ENCODE measurements at regions of chr22 and their contacts with region 1.

Region 1: GRCh38 chr22:36286471-36287224 is 33.7 kb downstream of the APOL1 start:
- DNase-seq: peak; percentile 77 to 83 (median 82)
- ATAC-seq: peak; percentile 99
- H3K4me3 ChIP-seq: no peak overlapping the region
- H3K27ac ChIP-seq: no peak overlapping the region; the same call in 2 of the 3 replicates
- H3K4me1 ChIP-seq: peaks cover 0 to 12% of the 10 kb centered on the region in 2 experiments; a peak in 2 of 5 replicates
- H3K27me3 ChIP-seq: no peaks in the 10 kb centered on the region
- CTCF ChIP-seq: peak; percentile 84 to 93 (median 91)
- EP300 ChIP-seq: no peak
- POLR2A ChIP-seq: no peak
- RAD21 ChIP-seq: peak; percentile 43 to 78

Region 2: DNA sequence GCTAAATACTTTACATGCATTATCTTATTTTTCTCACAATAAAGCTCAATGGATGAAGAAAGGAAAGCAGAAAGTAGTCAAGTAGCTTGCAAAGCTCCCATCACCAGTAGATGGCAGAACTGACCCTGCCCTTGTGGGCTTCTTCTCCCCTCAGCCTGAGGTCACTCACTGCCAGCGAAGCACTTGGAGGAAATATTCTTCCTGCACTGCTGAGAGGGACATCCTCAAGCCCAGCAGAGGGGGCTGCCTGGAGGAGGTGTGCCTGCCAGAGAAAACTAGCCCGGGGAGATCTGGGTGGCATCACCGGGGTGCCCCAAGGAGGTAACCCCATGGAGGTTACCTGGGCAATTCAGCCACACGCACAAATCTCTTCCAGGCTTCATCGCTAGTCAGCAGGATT is 91.7 kb before region 1 on chr22:
- CTCF ChIA-PET with region 1: interaction called, 3 read pairs
- POLR2A ChIA-PET with region 1: interaction called, 3 read pairs
- in situ Hi-C with region 1: no loop called
- intact Hi-C with region 1: loop called (anchors 2 kb)
- DNase-seq: peak in 2 of 4 experiments; percentile 20 to 56
- ATAC-seq: peak; percentile 72
- H3K4me3 ChIP-seq: no peak overlapping the region
- H3K27ac ChIP-seq: no peak overlapping the region
- H3K4me1 ChIP-seq: peaks cover 21 to 27% of the 10 kb centered on the region in 2 experiments; a peak in 4 of 5 replicates
- H3K27me3 ChIP-seq: no peaks in the 10 kb centered on the region
- CTCF ChIP-seq: peak; percentile 60 to 73 (median 60)
- EP300 ChIP-seq: no peak
- POLR2A ChIP-seq: no peak
- RAD21 ChIP-seq: peak; percentile 39 to 73; a peak in 3 of 4 replicates

Region 3: DNA sequence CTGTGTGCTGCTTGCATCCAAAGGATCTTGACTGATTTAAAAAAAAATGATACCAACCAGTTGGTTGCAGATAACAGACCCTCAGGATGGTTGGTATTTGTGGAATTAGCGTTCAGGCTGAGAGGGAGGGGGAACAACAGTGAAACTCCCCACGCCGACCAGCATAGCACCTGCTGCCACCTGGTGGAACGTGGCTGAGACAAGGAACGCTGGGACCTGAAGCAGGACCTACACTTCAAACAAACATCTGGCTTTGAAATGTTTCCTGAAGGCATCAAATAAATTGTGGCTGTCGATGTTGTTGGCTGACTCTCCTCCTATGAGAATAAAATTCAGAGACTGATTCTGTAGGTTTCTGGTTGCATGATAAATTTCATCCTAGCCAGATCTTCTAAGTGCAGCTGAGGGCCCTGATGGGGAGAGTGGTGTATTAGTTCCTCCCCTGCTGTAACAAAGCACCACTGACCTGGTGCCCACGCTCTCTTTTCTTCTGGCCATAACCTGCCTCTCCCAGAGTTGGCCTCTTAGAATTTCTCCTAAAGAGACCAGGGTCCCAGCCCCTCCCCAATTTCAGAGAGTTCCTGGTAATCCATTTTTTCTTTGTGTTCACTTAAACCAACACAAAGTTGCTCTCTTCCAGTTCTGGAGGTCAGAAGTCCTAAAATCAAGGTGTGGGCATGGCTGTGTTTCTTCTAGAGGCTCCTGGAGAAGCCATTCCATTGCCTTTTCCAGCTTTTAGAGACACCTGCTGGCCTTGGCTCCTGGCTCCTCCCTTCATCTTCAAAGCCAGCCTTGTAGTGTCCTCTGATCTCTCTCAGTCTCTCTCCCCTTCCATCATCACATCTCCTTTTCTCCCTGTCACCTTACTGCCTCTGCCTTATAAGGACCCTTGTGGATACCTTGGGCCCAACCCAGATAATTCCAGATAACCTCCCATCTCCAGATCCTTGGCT is 64.6 kb before region 1 on chr22:
- CTCF ChIA-PET with region 1: no interaction called
- POLR2A ChIA-PET with region 1: no interaction called
- in situ Hi-C with region 1: no loop called
- intact Hi-C with region 1: no loop called
- DNase-seq: peak; percentile 29 to 67 (median 40)
- ATAC-seq: peak; percentile 96
- H3K4me3 ChIP-seq: no peak overlapping the region
- H3K27ac ChIP-seq: no peak overlapping the region
- H3K4me1 ChIP-seq: peaks cover 0 to 8% of the 10 kb centered on the region in 2 experiments; a peak in 2 of 5 replicates
- H3K27me3 ChIP-seq: no peaks in the 10 kb centered on the region
- CTCF ChIP-seq: peak; percentile 69 to 81 (median 76)
- EP300 ChIP-seq: no peak
- POLR2A ChIP-seq: no peak
- RAD21 ChIP-seq: peak; percentile 54 to 84

Region 4: GRCh38 chr22:36301384-36301828 is 14.8 kb after region 1 on chr22:
- CTCF ChIA-PET with region 1: no interaction called
- POLR2A ChIA-PET with region 1: no interaction called
- in situ Hi-C with region 1: no loop called
- intact Hi-C with region 1: no loop called
- DNase-seq: peak; percentile 61 to 72 (median 67)
- ATAC-seq: peak; percentile 94
- H3K4me3 ChIP-seq: no peak overlapping the region
- H3K27ac ChIP-seq: no peak overlapping the region
- H3K4me1 ChIP-seq: no peaks in the 10 kb centered on the region
- H3K27me3 ChIP-seq: no peaks in the 10 kb centered on the region
- CTCF ChIP-seq: peak; percentile 76 to 86 (median 82)
- EP300 ChIP-seq: no peak
- POLR2A ChIP-seq: no peak
- RAD21 ChIP-seq: peak; percentile 46 to 81

Region 5: DNA sequence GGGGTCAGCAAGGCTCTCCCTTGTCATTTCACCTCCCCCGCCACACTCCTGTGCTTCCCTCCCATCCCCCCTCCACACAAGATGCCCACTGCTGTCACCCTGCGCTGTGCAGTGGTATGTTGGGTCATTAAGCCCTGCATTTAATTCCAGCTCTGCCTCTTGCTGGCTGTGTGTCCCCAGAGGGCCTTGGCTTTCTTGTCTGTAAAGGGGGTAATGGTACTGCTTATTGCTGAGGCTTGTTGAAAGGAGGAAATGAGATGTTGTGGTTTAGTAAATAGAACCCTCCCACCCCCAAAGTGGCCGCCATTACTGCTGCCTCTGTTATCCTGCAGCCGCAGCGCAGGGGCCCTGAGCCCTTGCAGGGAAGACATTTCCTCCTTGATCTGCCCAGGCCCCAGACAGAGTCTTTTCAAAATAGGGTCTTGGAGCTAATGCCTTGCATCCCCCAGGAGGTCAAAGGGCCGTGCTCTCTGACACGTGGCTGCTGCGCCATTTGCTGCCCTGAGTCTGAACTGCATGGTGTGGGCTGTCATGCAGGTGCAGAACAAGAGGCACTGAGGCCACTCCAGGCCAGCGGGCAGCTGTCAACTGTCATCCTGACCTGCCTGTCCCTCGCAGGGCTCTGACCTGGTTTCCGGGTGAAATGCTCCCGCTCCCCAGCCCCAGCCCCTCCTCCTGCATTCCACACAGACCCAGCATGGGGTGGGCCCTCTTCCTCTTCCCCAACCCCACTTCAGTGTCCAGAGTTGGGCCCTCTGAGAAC is 511.4 kb after region 1 on chr22:
- CTCF ChIA-PET with region 1: no interaction called
- POLR2A ChIA-PET with region 1: no interaction called
- in situ Hi-C with region 1: no loop called
- intact Hi-C with region 1: no loop called
- DNase-seq: no peak
- ATAC-seq: no peak
- H3K4me3 ChIP-seq: no peak overlapping the region
- H3K27ac ChIP-seq: no peak overlapping the region
- H3K4me1 ChIP-seq: no peaks in the 10 kb centered on the region
- H3K27me3 ChIP-seq: peaks cover 0 to 13% of the 10 kb centered on the region in 2 experiments; a peak in 3 of 5 replicates
- CTCF ChIP-seq: no peak
- EP300 ChIP-seq: no peak
- POLR2A ChIP-seq: no peak
- RAD21 ChIP-seq: no peak